ENCODE measurements at regions of chr10 and their contacts with region 1.

Region 1: GRCh38 chr10:11095374-11095801 is 77.7 kb downstream of the CELF2 start:
- DNase-seq: no peak
- H3K4me3 ChIP-seq: no peak overlapping the region
- H3K27ac ChIP-seq: no peak overlapping the region
- H3K4me1 ChIP-seq: no peaks in the 10 kb centered on the region
- H3K27me3 ChIP-seq: no peaks in the 10 kb centered on the region
- CTCF ChIP-seq: no peak

Region 2: DNA sequence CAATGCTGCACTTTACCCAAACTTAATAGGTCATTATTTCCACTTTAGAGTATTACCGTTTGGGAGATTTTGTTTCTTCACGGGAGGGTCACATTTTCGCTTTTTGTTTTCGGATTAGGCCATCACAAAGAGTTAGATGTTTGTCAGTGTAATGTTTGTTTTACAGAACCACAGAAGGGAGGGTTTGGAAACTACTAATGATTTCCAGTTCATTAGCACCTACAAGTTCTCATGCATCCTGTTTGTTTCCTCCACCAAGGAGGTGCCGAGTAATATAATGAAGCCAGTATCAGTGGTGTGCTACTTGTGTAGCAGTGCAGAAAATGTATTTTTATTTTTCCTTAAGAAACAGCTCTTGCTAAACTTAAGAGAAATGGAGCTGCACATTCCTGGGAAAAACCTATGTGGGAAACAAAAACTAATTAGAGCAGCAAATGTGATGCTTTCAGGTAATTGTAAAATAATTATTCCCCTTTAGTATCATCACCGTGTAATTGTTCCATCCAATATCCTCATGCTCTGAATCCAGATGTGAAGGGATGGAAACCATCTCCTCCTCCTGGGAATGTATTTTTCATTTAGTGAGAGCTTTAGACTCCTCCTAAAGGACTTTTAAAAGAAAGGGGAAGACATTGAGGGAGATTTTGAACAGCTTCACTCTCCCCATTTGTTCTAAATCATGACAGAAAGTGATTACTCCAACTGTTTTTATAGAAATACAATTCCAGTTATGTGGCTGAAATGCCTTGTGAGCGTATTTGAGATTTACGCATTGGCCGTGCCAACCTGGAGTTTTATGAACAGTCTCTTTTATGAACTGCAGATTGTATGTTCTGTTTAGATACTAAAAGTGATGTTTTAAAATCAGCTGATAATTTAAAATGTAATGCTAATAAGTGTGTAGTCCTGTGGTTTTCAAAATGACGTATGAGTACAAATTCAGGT is 72.1 kb before region 1 on chr10:
- intact Hi-C with region 1: loop called (anchors 2 kb)
- DNase-seq: no peak
- H3K4me3 ChIP-seq: no peak overlapping the region
- H3K27ac ChIP-seq: no peak overlapping the region
- H3K4me1 ChIP-seq: peaks cover 0 to 23% (median 11%) of the 10 kb centered on the region in 4 donors
- H3K27me3 ChIP-seq: no peaks in the 10 kb centered on the region
- CTCF ChIP-seq: no peak

Region 3: DNA sequence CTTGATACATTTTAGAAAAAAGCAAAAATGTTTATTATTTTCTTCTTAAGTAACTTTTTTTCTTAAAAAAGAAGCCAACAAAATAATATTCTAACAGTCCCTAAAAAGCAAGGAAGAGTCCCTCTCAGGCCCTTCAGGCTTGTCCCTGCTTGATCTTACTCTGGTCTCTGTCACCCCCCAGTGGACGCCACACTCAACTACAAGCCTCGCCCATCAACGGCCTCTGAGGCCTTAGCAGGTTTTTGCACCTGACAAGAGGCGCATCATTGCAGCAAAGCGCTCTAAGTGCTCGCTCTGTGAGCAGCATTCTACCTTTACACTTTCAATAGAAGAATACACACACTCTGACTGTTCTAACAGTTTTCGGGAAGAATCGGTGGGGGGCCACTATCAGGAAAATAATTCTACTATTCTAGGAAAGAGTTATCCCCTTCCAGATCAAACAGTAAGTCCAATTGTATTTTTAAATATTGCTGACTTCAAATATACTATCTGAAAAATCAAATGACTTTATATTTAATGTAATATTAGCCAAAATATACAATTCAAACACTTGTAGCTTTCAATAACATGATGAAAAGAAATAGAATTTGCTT is 376.9 kb after region 1 on chr10:
- intact Hi-C with region 1: no loop called
- DNase-seq: peak in 1 of 2 donors; percentile 47
- H3K4me3 ChIP-seq: no peak overlapping the region
- H3K27ac ChIP-seq: no peak overlapping the region
- H3K4me1 ChIP-seq: no peaks in the 10 kb centered on the region
- H3K27me3 ChIP-seq: no peaks in the 10 kb centered on the region
- CTCF ChIP-seq: peak; percentile 78 to 79